Head of caudate nucleus (tissue), 42 donors: ENCODE measurements at regions of chr18 and their contacts with region 1.

Region 1: GRCh38 chr18:58781627-58782194 is 83.0 kb upstream of the ZNF532 start:
- DNase-seq: peak; percentile 69 to 96 (median 88)

Region 2: GRCh38 chr18:58864146-58865032 is 82.7 kb after region 1 on chr18 and contains the start of gene ZNF532:
- intact Hi-C with region 1: loop called (anchors 5 kb)
- DNase-seq: peak in 41 of 42 donors; percentile 39 to 92 (median 75)

Region 3: DNA sequence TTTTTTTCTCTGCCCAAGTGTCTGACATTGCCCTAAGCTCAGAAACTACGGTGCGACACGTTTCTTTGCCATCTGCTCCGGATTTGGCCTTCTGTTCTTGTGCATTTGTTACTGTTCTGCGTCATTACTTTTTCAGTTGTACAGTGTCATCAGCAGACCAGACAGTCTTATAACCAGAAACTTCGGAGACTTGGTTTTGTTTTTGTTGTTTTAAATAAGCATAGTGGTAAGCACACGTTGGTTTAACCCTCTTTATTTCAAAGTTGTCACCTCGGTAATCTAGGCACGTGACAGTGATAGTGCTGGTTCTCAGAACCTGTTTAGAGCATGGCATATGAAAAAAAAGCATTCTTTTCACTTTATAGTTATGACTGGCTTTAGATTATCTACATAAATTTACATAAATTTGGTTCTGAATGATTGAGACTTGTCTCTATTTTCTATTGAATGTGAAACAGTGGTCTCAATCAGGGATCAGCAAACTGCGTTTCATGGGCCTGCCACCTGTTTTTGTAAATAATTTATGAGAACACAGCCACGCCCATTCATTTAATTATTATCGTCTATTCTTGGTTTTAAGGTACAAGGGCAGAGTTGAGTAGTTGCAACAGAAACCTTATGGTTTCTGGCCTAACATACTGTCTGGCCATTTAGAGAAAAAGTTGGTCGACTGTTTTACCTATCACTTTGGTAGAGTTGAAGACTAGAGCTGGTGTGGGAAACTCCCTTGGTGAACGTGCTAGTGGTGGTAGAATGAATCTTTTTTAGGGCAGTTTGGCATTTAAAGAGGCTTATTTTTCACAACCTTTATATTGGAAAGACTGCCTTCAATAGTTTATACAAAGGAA is 189.5 kb after region 1 on chr18:
- intact Hi-C with region 1: no loop called
- DNase-seq: no peak

Region 4: DNA sequence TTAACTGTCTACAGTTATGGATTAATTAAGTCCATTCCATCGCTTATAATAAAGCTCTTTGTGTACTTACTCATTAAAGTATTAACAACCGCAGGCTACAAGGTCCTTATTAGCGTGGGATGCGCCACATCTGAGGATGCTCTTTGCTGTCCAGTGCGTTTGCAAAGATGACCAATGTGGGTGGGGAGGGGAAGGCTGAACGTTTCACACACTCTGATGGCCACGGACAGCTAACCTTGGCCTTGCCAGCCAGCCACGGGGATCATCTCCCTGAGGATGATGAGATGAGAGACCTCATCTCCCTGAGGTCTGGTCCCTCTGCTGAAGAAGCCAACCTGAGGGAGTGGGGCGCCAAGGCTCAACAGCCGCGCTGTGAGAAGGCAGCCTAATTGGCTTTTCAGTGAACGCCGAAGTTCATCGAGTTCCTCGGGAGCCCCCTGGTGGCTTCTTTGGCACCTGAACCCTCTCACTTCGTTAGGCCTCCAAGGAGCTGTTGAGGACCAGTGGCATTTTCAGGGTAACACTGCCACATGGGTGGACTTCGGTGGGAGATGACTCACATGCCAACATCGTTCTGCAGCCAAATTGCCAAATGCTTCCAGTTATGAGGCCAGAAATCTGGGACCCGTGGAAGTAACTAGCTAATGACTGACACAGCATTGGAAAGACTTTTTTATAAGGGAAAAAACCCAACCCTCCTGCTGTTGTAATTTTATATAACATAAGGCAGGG is 288.6 kb after region 1 on chr18:
- intact Hi-C with region 1: loop called (anchors 2 kb)
- DNase-seq: peak; percentile 78 to 98 (median 93)